ENCODE measurements at regions of chr3 and their contacts with region 1.

Region 1: DNA sequence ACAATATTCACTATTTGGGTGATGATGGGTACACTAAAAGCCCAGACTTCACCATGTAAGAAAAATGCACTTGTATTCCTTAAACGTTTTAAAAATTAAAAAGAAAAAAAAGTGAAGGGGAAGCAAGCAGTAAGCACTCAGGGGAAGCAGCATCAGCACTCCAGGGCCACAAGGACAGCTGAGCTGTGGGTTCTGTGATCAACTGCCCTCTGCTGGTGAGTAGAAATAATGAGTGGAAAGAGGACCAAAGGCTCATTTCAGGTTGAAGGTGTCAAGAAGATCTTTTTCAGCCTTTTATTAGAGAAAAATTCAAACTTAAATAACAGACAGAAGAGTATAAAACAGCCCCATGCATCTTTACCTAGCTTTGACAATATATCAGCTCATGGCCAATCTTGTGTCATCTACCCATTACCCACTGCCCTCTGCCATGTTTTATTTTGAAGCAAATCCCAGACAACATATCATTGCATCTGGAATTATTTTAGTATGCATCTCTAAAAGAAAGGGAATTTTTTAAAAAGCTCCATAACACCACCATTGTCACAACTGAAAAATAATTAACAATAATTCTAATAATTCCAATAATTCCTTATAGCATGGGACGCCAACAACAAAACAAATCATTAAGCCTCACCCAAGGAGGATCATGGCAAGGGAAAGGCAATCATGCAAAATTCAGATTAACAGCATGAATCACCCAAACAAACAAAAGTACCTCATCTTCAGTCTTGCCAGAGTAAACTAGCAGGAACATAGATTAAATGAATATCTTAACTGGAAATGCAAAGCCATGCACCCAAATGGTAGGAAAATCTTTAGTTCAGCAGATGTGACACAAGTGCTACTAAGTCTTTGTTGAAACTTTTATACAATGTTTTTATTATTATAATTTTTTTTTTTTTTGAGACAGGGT is 42.5 kb downstream of the TAMM41 start:
- DNase-seq: peak in 2 of 4 donors; percentile 42 to 44
- ATAC-seq: peak; percentile 96
- H3K4me3 ChIP-seq: no peak overlapping the region
- H3K27ac ChIP-seq: no peak overlapping the region
- H3K4me1 ChIP-seq: no peaks in the 10 kb centered on the region
- H3K27me3 ChIP-seq: no peaks in the 10 kb centered on the region
- CTCF ChIP-seq: peak; percentile 49 to 64

Region 2: DNA sequence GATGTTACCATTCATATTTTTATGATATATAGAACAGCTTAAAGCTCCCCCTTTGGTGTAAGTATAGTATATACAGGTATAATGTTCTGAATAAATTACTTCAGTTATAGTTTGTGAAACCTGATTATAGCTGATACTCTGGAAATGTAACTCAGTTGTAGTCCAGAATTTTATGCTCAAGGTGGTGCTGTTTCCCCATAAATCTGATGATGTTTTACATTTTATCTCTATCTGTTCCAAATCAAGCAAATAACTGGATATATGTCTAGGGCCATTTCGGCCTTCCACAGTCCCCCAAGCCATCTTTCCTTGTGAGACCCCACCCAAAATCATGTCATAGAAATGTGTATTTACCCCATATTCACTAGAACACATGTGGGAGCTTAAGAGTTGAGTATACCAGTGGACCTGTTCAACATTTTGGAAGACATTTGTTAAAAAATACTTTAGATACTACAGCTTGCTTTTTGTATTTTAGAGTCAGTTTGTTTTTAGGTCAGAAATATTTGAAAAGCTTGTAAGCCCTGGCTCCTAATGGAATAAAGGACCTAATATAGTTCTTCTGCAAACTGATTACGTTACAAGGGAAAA is 424.9 kb before region 1 on chr3:
- intact Hi-C with region 1: loop called in 1 of 2 experiments (anchors 5 kb)
- DNase-seq: peak in 2 of 4 donors; percentile 75 to 76
- ATAC-seq: peak; percentile 80
- H3K4me3 ChIP-seq: no peak overlapping the region
- H3K27ac ChIP-seq: peak overlapping the region; percentile 31 to 58
- H3K4me1 ChIP-seq: peaks cover 0 to 4% of the 10 kb centered on the region in 2 donors
- H3K27me3 ChIP-seq: no peaks in the 10 kb centered on the region
- CTCF ChIP-seq: peak; percentile 34 to 44

Region 3: GRCh38 chr3:11465744-11466616 is 338.3 kb before region 1 on chr3:
- intact Hi-C with region 1: no loop called
- DNase-seq: no peak
- ATAC-seq: peak; percentile 65
- H3K4me3 ChIP-seq: no peak overlapping the region
- H3K27ac ChIP-seq: peak overlapping the region in 1 of 2 donors; percentile 77
- H3K4me1 ChIP-seq: peaks cover 0 to 5% of the 10 kb centered on the region in 2 donors
- H3K27me3 ChIP-seq: no peaks in the 10 kb centered on the region
- CTCF ChIP-seq: no peak

Region 4: DNA sequence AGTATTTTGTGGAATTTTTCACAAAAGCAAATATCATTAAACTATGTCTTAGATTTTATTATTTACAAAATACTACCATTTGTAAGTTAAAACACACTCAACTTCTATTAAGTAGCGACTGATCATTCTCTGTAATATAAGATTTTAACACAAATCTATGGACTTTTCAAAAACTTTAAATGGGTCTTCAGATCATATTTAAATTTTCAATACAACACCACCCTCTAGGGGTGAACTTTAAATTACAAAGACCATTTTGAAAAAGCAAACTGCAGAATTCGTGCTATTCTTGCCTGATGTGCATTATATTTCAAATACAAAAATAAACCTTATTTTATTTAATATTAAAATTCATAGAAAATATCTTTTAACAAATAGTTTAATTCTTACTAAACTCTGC is 152.3 kb before region 1 on chr3:
- intact Hi-C with region 1: loop called in 1 of 2 experiments (anchors 10 kb)
- DNase-seq: peak in 1 of 4 donors; percentile 55
- ATAC-seq: peak; percentile 40
- H3K4me3 ChIP-seq: no peak overlapping the region
- H3K27ac ChIP-seq: no peak overlapping the region
- H3K4me1 ChIP-seq: peaks cover 4 to 9% of the 10 kb centered on the region in 2 donors
- H3K27me3 ChIP-seq: no peaks in the 10 kb centered on the region
- CTCF ChIP-seq: peak; percentile 23 to 46

Region 5: DNA sequence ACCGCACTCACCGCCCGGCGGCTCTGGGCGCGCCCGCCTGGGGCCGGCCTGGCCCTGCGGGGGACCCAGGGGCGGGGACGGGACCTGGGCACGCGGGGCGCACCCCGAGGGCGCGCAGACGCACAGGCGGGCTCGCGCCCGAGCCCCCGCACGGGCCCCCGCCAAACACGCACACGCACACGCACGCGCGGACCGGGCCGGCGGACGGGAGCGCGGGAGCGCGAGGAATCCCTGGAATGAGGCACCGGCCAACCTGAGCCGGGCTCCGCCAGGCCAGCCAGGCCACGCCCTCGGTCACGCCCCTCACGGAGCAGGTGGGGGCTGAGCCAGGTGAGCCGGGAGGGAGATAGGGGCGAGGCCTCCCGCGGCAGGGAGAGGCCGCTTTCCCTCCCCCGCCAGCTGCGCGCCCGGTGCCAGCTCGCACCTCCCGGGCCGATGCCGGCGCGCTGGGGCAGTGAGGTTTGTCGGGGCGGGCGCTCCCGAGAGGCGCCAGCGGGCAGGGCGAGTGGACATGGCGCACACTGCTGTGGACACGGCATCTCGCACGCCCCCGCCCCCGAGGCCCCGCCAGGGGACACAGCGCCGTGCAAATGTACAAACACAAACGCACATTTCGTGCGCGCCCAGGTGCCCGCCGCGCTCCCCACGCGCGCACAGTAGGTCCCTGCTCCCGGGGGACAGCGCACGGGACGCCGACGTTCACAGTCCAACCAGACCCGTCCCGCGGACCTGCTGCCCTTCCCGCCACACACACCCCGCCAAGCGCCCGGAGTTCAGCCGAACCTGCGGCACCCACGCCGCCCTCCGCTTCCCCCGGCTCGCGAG is 84.6 kb before region 1 on chr3:
- intact Hi-C with region 1: no loop called
- DNase-seq: peak; percentile 65 to 95 (median 90)
- ATAC-seq: peak; percentile 89
- H3K4me3 ChIP-seq: peak overlapping the region; percentile 82 to 86
- H3K27ac ChIP-seq: peak overlapping the region; percentile 86 to 94
- H3K4me1 ChIP-seq: peaks cover 0 to 43% of the 10 kb centered on the region in 2 donors
- H3K27me3 ChIP-seq: peaks cover 0 to 24% of the 10 kb centered on the region in 2 donors
- CTCF ChIP-seq: no peak